GM18951 (cell line): ENCODE measurements at regions of chr11 and their contacts with region 1.

Region 1: DNA sequence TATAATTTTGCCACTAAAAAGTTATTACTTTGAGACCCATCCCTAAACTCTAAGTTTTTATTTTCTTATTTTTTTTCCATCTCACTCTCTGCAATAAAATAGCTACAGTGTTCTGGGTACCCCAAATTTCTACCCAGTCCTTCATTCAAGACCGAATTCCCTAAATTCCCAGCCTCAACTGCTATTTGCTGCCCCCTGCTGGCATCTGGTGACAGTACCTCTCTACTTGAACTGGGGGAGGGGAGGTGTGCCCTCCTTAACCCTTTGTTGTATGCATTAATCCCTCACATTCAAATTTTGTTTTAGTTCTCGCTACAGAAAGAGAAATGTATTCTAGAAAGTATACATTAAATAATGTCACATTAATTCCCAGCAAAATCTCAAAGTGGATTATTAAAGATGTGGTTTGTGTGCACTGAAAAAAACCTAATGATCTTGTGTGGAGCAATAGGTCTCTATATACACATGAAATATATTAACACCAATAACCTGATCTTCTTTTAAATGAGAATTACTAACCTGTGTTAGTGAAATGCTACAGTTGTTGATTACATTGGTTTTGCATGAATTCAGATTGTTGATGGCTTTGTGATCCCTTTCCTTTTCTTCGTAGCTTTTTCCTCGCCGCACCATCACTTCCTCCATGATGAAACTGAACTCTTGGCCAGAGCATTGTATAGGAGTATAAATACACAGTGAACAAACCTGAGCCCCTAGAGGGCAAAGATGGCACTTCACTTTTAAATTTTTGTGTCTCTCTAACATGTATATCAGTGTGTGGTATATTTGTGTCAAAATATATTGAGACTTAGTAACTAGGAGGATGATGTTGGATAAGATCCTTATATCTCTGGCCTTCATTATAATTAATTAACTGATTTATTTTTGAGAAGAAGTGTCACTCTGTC is 590.0 kb downstream of the METTL15 start:
- POLR2A ChIP-seq: no peak

Region 2: GRCh38 chr11:27698872-27699474 is 999.2 kb before region 1 on chr11:
- in situ Hi-C with region 1: loop called (anchors 25 kb)
- POLR2A ChIP-seq: no peak

Region 3: DNA sequence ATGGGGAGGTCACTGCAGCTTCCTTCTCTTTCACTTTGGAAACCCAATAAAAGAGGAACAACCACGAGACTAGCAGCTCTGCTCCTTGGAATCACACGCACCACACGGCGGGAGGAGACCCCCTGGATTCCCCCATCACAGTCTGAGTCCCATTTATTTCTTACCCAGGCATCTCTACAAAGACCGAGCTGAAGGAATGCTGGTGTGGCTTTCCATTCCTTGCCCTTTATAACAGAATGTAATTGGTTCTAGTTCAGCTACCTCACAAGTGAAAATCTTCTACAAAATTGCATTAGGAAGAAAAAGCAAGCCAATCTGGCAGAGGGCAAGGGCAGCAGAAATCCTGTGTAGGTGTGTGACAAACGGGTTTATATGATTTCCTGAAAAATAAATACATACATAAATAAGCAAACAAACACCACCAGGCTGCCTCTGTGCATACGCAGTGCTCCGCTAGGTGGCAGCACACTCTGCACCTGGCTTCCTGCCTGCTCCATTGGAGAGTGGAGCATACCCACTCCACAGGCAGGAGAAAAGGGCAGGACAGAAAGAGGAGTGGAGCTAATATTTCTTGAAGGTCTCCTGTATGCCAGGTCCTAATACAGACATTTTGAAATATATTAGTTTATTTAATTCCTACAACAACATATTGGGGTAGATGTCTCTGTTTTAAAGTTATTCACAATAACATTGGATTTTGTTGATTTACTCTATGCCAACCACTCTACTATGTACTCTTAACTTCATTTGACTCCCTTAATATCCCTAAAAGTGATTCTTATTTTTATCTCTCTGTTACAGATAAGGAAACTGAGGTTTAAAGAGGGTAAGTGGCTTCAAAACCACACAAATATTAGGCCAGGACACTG is 645.5 kb after region 1 on chr11:
- in situ Hi-C with region 1: loop called (anchors 25 kb)
- POLR2A ChIP-seq: no peak